MCF 10A (cell line): ENCODE measurements at regions of chr10 and their contacts with region 1.

Region 1: GRCh38 chr10:24435374-24435773 is 226.4 kb downstream of the KIAA1217 start:
- DNase-seq: peak; percentile 56
- H3K4me3 Mint-ChIP-seq: no peak overlapping the region
- H3K27ac Mint-ChIP-seq: peak overlapping the region; percentile 36
- H3K4me1 Mint-ChIP-seq: peaks cover 11% of the 10 kb centered on the region
- H3K27me3 Mint-ChIP-seq: no peaks in the 10 kb centered on the region
- CTCF ChIP-seq: no peak

Region 2: DNA sequence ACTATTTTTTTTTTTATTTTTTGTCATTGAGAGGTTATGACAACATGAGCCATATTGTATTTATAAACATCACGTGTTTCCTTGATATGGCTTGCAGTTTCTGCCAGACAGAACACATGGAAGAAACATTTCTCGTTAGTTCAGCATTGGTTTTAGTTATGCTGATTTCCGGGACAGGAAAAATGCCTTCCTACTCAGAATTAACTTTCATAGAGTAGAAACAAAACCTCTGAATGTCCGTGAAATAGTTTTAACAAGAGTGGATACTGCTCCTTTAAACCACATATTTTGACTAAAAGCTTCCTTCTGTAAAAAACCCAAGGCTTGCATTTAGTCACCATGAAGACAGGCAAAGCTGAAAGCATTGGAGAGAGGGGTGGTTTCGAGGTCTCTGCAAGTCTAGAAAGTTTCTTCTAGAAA is 14.0 kb after region 1 on chr10:
- CTCF ChIA-PET with region 1: interaction called, 3 read pairs
- POLR2A ChIA-PET with region 1: interaction called, 11 read pairs
- intact Hi-C with region 1: no loop called
- DNase-seq: no peak
- H3K4me3 Mint-ChIP-seq: no peak overlapping the region
- H3K27ac Mint-ChIP-seq: no peak overlapping the region
- H3K4me1 Mint-ChIP-seq: peaks cover 19% of the 10 kb centered on the region
- H3K27me3 Mint-ChIP-seq: no peaks in the 10 kb centered on the region
- CTCF ChIP-seq: no peak

Region 3: GRCh38 chr10:24456322-24456721 is 20.9 kb after region 1 on chr10:
- CTCF ChIA-PET with region 1: interaction called, 4 read pairs
- POLR2A ChIA-PET with region 1: interaction called, 21 read pairs
- intact Hi-C with region 1: no loop called
- DNase-seq: peak; percentile 72
- H3K4me3 Mint-ChIP-seq: peak overlapping the region; percentile 44
- H3K27ac Mint-ChIP-seq: peak overlapping the region; percentile 73
- H3K4me1 Mint-ChIP-seq: peaks cover 23% of the 10 kb centered on the region
- H3K27me3 Mint-ChIP-seq: no peaks in the 10 kb centered on the region
- CTCF ChIP-seq: no peak

Region 4: DNA sequence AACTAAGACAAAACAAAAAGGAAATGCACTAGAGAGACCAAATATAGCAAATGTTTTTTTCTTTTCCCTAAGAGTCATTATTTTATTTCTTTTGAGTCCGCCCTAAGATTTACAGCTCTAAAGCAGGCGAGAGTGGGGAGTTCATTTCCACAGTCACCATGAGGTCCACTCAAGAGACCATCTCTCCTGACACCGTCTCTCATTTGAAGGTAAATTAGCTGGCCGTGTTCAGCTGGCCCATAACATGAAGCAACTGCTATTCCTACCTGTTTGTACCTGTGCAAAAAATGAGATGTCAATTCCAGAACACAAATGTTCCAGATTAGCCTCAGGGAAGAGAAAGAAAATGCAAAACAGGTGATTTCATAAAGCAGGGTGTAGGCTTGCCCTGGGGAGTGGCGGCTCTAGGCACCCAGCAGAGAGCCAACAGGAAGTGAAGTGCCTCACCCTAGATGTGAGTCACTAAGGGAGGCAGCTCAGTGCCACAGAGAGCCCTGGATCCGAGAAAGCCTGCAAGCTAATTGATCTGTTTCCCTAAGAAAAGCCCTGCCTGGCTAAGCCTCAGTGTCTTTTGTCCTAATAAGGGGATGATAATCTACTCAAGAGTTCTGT is 48.2 kb after region 1 on chr10:
- CTCF ChIA-PET with region 1: interaction called, 4 read pairs
- POLR2A ChIA-PET with region 1: interaction called, 14 read pairs
- intact Hi-C with region 1: no loop called
- DNase-seq: peak; percentile 98
- H3K4me3 Mint-ChIP-seq: peak overlapping the region; percentile 55
- H3K27ac Mint-ChIP-seq: peak overlapping the region; percentile 98
- H3K4me1 Mint-ChIP-seq: peaks cover 32% of the 10 kb centered on the region
- H3K27me3 Mint-ChIP-seq: no peaks in the 10 kb centered on the region
- CTCF ChIP-seq: no peak